AG04450 (cell line): ENCODE measurements at regions of chr9 and their contacts with region 1.

Region 1: GRCh38 chr9:97598461-97599288 is 34.5 kb downstream of the TSTD2 start:
- DNase-seq: peak; percentile 60
- H3K4me3 ChIP-seq: no peak overlapping the region
- H3K27ac ChIP-seq: no peak overlapping the region
- H3K27me3 ChIP-seq: peaks cover 6% of the 10 kb centered on the region
- CTCF ChIP-seq: peak; percentile 95

Region 2: GRCh38 chr9:96856363-96857286 is 742.0 kb before region 1 on chr9:
- CTCF ChIA-PET with region 1: interaction called, 36 read pairs
- POLR2A ChIA-PET with region 1: no interaction called
- DNase-seq: peak; percentile 32
- H3K4me3 ChIP-seq: no peak overlapping the region
- H3K27ac ChIP-seq: no peak overlapping the region
- H3K27me3 ChIP-seq: no peaks in the 10 kb centered on the region
- CTCF ChIP-seq: peak; percentile 91

Region 3: GRCh38 chr9:97440160-97440559 is 158.5 kb before region 1 on chr9:
- CTCF ChIA-PET with region 1: interaction called, 12 read pairs
- POLR2A ChIA-PET with region 1: no interaction called
- DNase-seq: no peak
- H3K4me3 ChIP-seq: no peak overlapping the region
- H3K27ac ChIP-seq: no peak overlapping the region
- H3K27me3 ChIP-seq: no peaks in the 10 kb centered on the region
- CTCF ChIP-seq: no peak

Region 4: DNA sequence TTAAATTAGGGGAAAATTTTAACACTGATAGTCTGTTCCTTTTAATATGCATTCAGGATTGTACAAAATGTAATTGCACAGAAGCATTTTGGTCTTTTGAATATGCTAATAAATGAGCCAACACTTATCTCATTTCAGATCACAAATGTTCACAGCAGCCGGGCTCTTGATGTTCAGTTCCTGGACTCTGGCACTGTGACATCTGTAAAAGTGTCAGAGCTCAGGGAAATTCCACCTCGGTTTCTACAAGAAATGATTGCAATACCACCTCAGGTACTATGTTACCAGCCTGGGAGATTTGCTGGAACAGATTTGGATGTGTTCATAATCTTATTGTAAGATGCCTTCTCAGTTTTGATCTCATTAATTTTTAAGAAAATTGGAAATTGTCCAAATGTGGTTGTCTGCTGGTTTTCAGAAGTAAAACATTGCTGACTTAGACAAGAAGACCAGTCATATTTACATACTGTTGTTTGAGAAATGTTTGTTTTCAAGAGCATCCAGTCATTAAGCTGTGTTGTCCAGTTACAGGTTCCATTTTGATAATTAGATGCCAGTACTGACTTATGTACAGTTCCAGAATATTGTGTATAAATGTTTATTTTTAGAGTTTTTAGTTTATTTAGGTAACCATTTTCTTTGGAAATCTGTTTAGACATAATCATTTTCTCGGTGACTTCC is 120.2 kb before region 1 on chr9:
- CTCF ChIA-PET with region 1: interaction called, 704 read pairs
- POLR2A ChIA-PET with region 1: no interaction called
- DNase-seq: no peak
- H3K4me3 ChIP-seq: no peak overlapping the region
- H3K27ac ChIP-seq: no peak overlapping the region
- H3K27me3 ChIP-seq: no peaks in the 10 kb centered on the region
- CTCF ChIP-seq: no peak

Region 5: GRCh38 chr9:97518909-97519307 is 79.8 kb before region 1 on chr9:
- CTCF ChIA-PET with region 1: interaction called, 16 read pairs
- POLR2A ChIA-PET with region 1: no interaction called
- DNase-seq: peak; percentile 46
- H3K4me3 ChIP-seq: no peak overlapping the region
- H3K27ac ChIP-seq: peak overlapping the region; percentile 21
- H3K27me3 ChIP-seq: peaks cover 28% of the 10 kb centered on the region
- CTCF ChIP-seq: no peak

Region 6: DNA sequence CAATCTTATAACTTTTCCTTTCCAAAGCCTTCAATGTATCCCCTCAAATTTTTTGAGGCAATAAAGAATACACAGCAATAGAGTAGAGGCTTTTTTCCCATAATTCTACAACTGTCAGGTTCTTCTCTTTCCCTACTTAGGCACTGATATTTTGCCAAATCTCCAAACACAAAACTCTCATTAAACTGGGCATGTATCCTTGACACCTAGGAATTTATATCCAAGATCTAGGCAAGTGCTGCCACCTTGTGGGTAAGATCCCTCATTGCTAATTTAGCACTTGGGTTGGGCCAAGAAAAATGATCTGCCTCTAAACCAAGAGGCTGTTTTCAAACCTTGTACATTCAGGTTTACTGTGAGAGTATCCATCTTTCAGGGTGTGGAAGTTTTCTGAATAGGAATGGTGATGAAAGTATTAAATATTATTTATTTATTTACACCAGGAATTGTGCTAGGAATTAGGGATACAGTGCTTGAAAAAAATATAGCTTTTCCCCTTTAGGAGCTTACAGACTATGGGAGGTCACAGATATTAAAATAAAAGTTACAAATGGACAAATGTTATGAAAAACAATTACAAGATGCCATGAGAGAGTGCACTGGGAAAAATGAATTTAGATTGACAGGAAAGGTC is 16.9 kb after region 1 on chr9:
- CTCF ChIA-PET with region 1: interaction called, 177 read pairs
- POLR2A ChIA-PET with region 1: interaction called, 4 read pairs
- DNase-seq: peak; percentile 32
- H3K4me3 ChIP-seq: no peak overlapping the region
- H3K27ac ChIP-seq: no peak overlapping the region
- H3K27me3 ChIP-seq: no peaks in the 10 kb centered on the region
- CTCF ChIP-seq: peak; percentile 84